Naive thymus-derived CD4-positive, alpha-beta T cell (primary cell): ENCODE measurements at regions of chr13 and their contacts with region 1.

Region 1: GRCh38 chr13:48233046-48233907 is at the start of gene ITM2B:
- DNase-seq: peak; percentile 57 to 76 (median 70)
- ATAC-seq: peak; percentile 88
- H3K4me3 ChIP-seq: peak within 1 kb of the TSS; percentile 85
- H3K4me3 Mint-ChIP-seq: peak within 1 kb of the TSS; percentile 90 to 99 (median 97)
- H3K27ac ChIP-seq: peak within 1 kb of the TSS; percentile 94
- H3K27ac Mint-ChIP-seq: peak within 1 kb of the TSS; percentile 90 to 99 (median 98)
- H3K4me1 ChIP-seq: peaks cover 31 to 35% of the 10 kb centered on the region in 2 donors
- H3K4me1 Mint-ChIP-seq: peaks cover 32 to 63% (median 57%) of the 10 kb centered on the region in 7 donors
- H3K27me3 ChIP-seq: no peaks in the 10 kb centered on the region
- H3K27me3 Mint-ChIP-seq: peaks cover 0 to 31% (median 0%) of the 10 kb centered on the region in 5 donors
- total RNA-seq, gene ITM2B: 190 to 733 (median 412) TPM

Region 2: GRCh38 chr13:48037346-48038173 is 195.7 kb before region 1 on chr13 and contains the start of gene NUDT15:
- CTCF ChIA-PET with region 1: no interaction called
- POLR2A ChIA-PET with region 1: interaction called, 3 read pairs
- intact Hi-C with region 1: loop called (anchors 1 to 2 kb)
- DNase-seq: peak; percentile 93 to 98 (median 97)
- ATAC-seq: peak; percentile 96
- H3K4me3 ChIP-seq: peak within 1 kb of the TSS; percentile 90
- H3K4me3 Mint-ChIP-seq: peak within 1 kb of the TSS; percentile 82 to 98 (median 95)
- H3K27ac ChIP-seq: peak within 1 kb of the TSS; percentile 91
- H3K27ac Mint-ChIP-seq: peak within 1 kb of the TSS; percentile 96 to 100 (median 97)
- H3K4me1 ChIP-seq: peaks cover 14 to 15% of the 10 kb centered on the region in 2 donors
- H3K4me1 Mint-ChIP-seq: peaks cover 15 to 52% (median 40%) of the 10 kb centered on the region in 7 donors
- H3K27me3 ChIP-seq: no peaks in the 10 kb centered on the region
- H3K27me3 Mint-ChIP-seq: no peaks in the 10 kb centered on the region
- total RNA-seq, gene NUDT15: 4.3 to 13.6 (median 8.7) TPM

Region 3: GRCh38 chr13:48155848-48156247 is 77.4 kb before region 1 on chr13:
- CTCF ChIA-PET with region 1: interaction called, 16 read pairs
- POLR2A ChIA-PET with region 1: interaction called, 102 read pairs
- intact Hi-C with region 1: loop called (anchors 1 kb)
- DNase-seq: peak in 7 of 9 donors; percentile 49 to 81 (median 74)
- ATAC-seq: peak; percentile 88
- H3K4me3 ChIP-seq: peak overlapping the region; percentile 34
- H3K4me3 Mint-ChIP-seq: peak overlapping the region; percentile 62 to 83 (median 74)
- H3K27ac ChIP-seq: peak overlapping the region; percentile 75
- H3K27ac Mint-ChIP-seq: peak overlapping the region; percentile 89 to 99 (median 92)
- H3K4me1 ChIP-seq: peaks cover 28 to 64% of the 10 kb centered on the region in 2 donors
- H3K4me1 Mint-ChIP-seq: peaks cover 47 to 89% (median 78%) of the 10 kb centered on the region in 7 donors
- H3K27me3 ChIP-seq: no peaks in the 10 kb centered on the region
- H3K27me3 Mint-ChIP-seq: no peaks in the 10 kb centered on the region

Region 4: GRCh38 chr13:48199499-48199898 is 33.8 kb before region 1 on chr13:
- CTCF ChIA-PET with region 1: interaction called, 3 read pairs
- POLR2A ChIA-PET with region 1: interaction called, 24 read pairs
- intact Hi-C with region 1: no loop called
- DNase-seq: no peak
- ATAC-seq: no peak
- H3K4me3 ChIP-seq: no peak overlapping the region
- H3K4me3 Mint-ChIP-seq: peak overlapping the region in 6 of 10 donors; percentile 1 to 44 (median 10)
- H3K27ac ChIP-seq: no peak overlapping the region
- H3K27ac Mint-ChIP-seq: peak overlapping the region in 8 of 9 donors; percentile 46 to 82 (median 69)
- H3K4me1 ChIP-seq: peaks cover under 1 to 10% of the 10 kb centered on the region in 2 donors
- H3K4me1 Mint-ChIP-seq: peaks cover 5 to 36% (median 28%) of the 10 kb centered on the region in 7 donors
- H3K27me3 ChIP-seq: no peaks in the 10 kb centered on the region
- H3K27me3 Mint-ChIP-seq: peaks cover 0 to 35% (median 0%) of the 10 kb centered on the region in 5 donors

Region 5: DNA sequence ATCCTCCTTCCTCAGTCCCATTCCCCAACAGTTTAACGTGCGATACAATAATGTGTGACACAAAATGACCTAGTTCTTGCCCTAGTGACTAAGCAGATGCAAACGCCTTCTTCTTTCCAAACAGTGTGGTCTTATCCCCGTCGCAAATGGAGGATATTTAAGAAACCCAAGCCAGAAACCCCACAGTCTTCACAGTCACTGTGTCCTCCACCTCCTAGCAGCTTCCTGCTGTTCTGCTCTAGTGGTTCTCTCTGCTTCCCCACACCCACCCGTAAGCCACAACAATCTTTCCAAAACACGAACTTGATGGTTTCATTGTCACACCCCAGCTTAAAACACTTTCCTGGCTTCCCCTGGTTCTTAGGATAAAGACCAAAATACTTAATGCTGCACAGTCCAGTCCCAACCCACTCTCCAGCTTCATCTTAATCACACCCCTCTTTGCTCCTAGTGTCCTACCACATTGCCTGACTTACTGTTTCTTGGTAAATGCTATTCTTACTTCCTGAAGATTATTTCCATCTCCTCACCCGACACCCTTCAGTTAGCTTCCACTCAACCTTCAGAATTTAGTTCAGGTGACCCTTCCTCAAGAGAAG is 32.0 kb after region 1 on chr13:
- CTCF ChIA-PET with region 1: interaction called, 3 read pairs
- POLR2A ChIA-PET with region 1: interaction called, 11 read pairs
- intact Hi-C with region 1: no loop called
- DNase-seq: peak in 3 of 9 donors; percentile 17 to 38 (median 27)
- ATAC-seq: peak; percentile 48
- H3K4me3 ChIP-seq: no peak overlapping the region
- H3K4me3 Mint-ChIP-seq: peak overlapping the region in 9 of 10 donors; percentile 15 to 72 (median 54)
- H3K27ac ChIP-seq: no peak overlapping the region
- H3K27ac Mint-ChIP-seq: peak overlapping the region; percentile 7 to 92 (median 86)
- H3K4me1 ChIP-seq: peaks cover 0 to 22% of the 10 kb centered on the region in 2 donors
- H3K4me1 Mint-ChIP-seq: peaks cover 22 to 73% (median 54%) of the 10 kb centered on the region in 7 donors
- H3K27me3 ChIP-seq: no peaks in the 10 kb centered on the region
- H3K27me3 Mint-ChIP-seq: no peaks in the 10 kb centered on the region

Region 6: DNA sequence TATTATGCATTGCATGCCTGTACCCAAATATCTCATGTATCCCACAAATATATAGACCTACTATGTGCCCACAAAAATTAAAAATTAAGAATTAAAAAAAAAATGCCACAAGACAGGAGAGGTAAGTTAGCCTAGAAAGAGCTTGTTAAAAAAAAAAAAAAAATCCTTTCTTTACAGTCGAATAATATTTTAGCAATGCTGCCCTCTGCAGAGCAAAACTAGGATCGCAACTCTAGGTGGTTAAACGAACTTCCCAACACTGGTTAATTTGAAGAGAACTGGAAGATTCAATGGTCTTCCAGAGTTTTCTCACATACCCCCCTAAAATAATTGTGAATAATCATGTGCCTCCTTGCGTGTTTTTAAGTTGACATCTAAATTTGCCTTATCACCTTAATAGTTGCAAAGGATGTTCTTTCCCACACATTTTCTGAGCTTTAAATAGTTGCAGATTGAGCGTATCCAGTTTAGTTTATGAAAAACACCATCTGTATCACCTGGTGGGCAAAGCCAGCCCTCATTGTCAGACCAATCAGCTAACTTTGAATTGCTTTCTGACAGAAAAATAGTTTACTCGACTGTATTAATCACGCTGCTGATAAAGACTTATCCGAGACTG is 347.0 kb after region 1 on chr13:
- CTCF ChIA-PET with region 1: no interaction called
- POLR2A ChIA-PET with region 1: interaction called, 3 read pairs
- intact Hi-C with region 1: loop called in 1 of 2 experiments (anchors 10 kb)
- DNase-seq: peak; percentile 44 to 79 (median 61)
- ATAC-seq: peak; percentile 84
- H3K4me3 ChIP-seq: no peak overlapping the region
- H3K4me3 Mint-ChIP-seq: no peak overlapping the region
- H3K27ac ChIP-seq: no peak overlapping the region
- H3K27ac Mint-ChIP-seq: no peak overlapping the region
- H3K4me1 ChIP-seq: peaks cover 0 to 6% of the 10 kb centered on the region in 2 donors
- H3K4me1 Mint-ChIP-seq: peaks cover 0 to 25% (median 6%) of the 10 kb centered on the region in 7 donors
- H3K27me3 ChIP-seq: no peaks in the 10 kb centered on the region
- H3K27me3 Mint-ChIP-seq: peaks cover 0 to 68% (median 3%) of the 10 kb centered on the region in 5 donors